ENCODE measurements at regions of chr17 and their contacts with region 1.

Region 1: GRCh38 chr17:78806451-78806850 is 24.4 kb upstream of the CYTH1 start:
- DNase-seq: no peak
- H3K4me3 Mint-ChIP-seq: no peak overlapping the region
- H3K27ac Mint-ChIP-seq: peak overlapping the region; percentile 95
- H3K4me1 Mint-ChIP-seq: peaks cover 63% of the 10 kb centered on the region
- H3K27me3 Mint-ChIP-seq: no peaks in the 10 kb centered on the region

Region 2: DNA sequence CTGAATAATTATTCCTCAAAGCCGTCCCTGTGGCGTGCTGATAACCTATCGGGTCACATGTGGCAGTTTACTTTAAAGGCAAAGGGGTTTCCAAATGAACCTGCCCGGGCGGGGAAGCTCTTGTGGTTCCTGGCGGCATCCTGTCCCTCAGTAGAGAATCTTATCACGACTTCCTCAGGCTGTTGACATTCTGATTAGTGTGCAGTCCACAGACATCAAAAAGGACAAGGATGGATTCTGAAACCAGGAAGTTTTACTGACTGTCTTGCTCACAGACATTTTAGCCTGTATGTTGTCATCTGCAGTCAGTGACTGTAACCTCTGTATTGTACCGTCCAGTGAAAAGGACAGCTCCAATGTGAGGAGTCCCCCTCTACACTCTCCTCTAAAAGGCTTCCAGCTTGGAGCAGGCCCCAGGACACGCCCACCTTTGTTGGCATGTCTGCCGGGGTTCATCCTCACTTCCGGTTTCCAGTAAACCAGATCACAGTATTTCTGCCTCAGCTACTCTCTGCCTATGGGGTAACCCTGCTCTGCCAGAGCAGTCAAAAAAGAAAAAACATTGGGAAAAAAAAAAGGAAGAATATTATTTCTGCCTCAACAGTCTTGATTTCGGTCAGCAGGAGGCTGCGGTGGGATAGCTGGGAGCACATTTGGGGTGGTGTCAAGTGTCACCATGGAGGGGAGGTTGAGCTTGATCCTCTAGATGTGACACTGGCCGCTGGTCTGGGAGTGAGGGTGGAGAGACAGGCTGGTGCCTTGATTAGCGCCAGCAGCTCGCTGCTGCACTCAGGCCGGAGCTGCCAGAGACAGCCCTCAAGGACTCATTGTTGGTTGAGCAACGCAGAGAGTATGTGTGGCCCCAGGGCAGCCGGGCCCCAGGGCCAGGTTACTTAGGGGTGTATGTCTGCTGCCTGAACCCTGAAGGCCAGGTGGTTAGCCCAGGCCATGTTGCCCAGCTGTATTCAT is 140.2 kb before region 1 on chr17:
- CTCF ChIA-PET with region 1: no interaction called
- POLR2A ChIA-PET with region 1: no interaction called
- DNase-seq: peak; percentile 70
- H3K4me3 Mint-ChIP-seq: peak overlapping the region; percentile 0
- H3K27ac Mint-ChIP-seq: peak overlapping the region; percentile 76
- H3K4me1 Mint-ChIP-seq: peaks cover 49% of the 10 kb centered on the region
- H3K27me3 Mint-ChIP-seq: no peaks in the 10 kb centered on the region

Region 3: GRCh38 chr17:78689029-78689428 is 117.4 kb before region 1 on chr17:
- CTCF ChIA-PET with region 1: no interaction called
- POLR2A ChIA-PET with region 1: no interaction called
- DNase-seq: no peak
- H3K4me3 Mint-ChIP-seq: no peak overlapping the region
- H3K27ac Mint-ChIP-seq: peak overlapping the region; percentile 32
- H3K4me1 Mint-ChIP-seq: peaks cover 8% of the 10 kb centered on the region
- H3K27me3 Mint-ChIP-seq: no peaks in the 10 kb centered on the region

Region 4: DNA sequence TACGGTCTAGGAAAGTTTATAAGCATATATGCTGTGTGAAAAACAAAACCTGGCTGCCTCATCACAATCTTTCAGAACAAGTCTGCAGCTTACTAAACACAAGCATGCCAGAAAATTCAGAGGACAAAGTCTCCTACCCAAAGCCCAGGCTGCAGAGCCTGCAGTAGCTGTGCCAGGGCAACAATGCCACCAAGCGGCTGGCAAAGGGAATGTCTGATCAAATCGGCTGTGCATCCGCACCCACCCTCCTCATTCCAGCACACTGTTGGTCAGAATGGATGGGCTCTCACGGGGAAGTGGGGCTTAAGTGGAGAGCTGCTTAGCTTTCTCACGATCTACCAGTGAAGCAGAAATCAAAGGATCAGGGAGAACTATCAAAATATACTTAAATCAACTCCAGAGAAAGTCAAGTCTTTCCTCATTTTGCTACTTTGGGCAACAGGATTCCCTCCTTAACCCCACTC is 97.9 kb before region 1 on chr17:
- CTCF ChIA-PET with region 1: interaction called, 10 read pairs
- POLR2A ChIA-PET with region 1: interaction called, 9 read pairs
- DNase-seq: peak; percentile 68
- H3K4me3 Mint-ChIP-seq: peak overlapping the region; percentile 29
- H3K27ac Mint-ChIP-seq: peak overlapping the region; percentile 80
- H3K4me1 Mint-ChIP-seq: peaks cover 68% of the 10 kb centered on the region
- H3K27me3 Mint-ChIP-seq: no peaks in the 10 kb centered on the region

Region 5: DNA sequence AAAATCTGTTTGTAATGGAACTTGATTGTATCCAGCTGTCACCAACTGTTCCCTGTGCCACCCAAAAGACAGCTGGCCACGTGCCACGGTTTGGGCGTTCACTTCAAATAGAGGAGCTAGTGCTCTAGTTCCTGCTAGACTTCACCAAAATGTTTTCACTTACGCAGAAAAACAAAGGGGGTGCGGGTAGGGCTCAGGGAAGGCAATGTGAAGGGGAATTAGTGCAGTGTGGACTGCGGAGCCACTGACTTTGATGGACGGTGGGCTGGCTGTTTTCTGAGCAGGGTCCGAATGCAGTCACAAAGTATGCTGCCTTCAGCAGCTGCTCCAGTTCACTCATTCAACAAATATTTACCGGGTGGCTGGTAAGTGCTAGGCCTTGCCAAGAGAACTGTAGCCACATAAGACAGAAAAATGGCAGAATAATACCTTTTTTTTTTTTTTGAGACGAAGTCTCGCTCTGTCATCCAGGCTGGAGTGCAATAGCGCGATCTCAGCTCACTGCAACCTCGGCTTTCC is 16.7 kb before region 1 on chr17:
- CTCF ChIA-PET with region 1: interaction called, 3 read pairs
- POLR2A ChIA-PET with region 1: interaction called, 28 read pairs
- DNase-seq: no peak
- H3K4me3 Mint-ChIP-seq: no peak overlapping the region
- H3K27ac Mint-ChIP-seq: peak overlapping the region; percentile 82
- H3K4me1 Mint-ChIP-seq: peaks cover 65% of the 10 kb centered on the region
- H3K27me3 Mint-ChIP-seq: no peaks in the 10 kb centered on the region

Region 6: GRCh38 chr17:78817123-78817522 is 10.7 kb after region 1 on chr17:
- CTCF ChIA-PET with region 1: interaction called, 3 read pairs
- POLR2A ChIA-PET with region 1: interaction called, 51 read pairs
- DNase-seq: peak; percentile 88
- H3K4me3 Mint-ChIP-seq: peak overlapping the region; percentile 5
- H3K27ac Mint-ChIP-seq: peak overlapping the region; percentile 98
- H3K4me1 Mint-ChIP-seq: peaks cover 63% of the 10 kb centered on the region
- H3K27me3 Mint-ChIP-seq: no peaks in the 10 kb centered on the region

Region 7: DNA sequence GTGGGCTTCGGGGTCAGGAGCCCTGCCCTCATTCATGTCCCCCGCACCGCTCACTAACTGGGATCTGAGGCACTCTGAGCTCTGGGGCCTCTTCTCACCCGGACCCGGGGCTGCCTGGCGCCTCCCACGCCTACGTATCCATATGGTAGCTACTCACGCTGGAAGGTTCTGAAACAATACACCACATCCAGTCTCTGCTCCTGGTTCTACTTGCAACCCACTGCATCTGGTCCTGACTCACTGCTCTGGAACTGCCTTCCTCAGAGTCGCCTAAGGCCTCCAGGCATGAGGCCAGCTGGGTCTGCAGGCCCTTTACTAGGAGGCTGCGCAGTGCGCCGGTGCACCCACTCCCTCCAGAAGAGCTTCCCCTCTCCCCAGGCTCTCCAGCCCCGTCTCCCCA is 16.1 kb after region 1 on chr17:
- CTCF ChIA-PET with region 1: interaction called, 3 read pairs
- POLR2A ChIA-PET with region 1: interaction called, 51 read pairs
- DNase-seq: no peak
- H3K4me3 Mint-ChIP-seq: no peak overlapping the region
- H3K27ac Mint-ChIP-seq: peak overlapping the region; percentile 38
- H3K4me1 Mint-ChIP-seq: peaks cover 54% of the 10 kb centered on the region
- H3K27me3 Mint-ChIP-seq: no peaks in the 10 kb centered on the region

Region 8: GRCh38 chr17:78840725-78841611 is 34.5 kb after region 1 on chr17 and contains the start of gene USP36:
- CTCF ChIA-PET with region 1: no interaction called
- POLR2A ChIA-PET with region 1: interaction called, 20 read pairs
- DNase-seq: peak; percentile 100
- H3K4me3 Mint-ChIP-seq: peak within 1 kb of the TSS; percentile 94
- H3K27ac Mint-ChIP-seq: peak within 1 kb of the TSS; percentile 94
- H3K4me1 Mint-ChIP-seq: peaks cover 55% of the 10 kb centered on the region
- H3K27me3 Mint-ChIP-seq: no peaks in the 10 kb centered on the region
- total RNA-seq, gene USP36: 95.4 to 96.8 TPM

Measured in activated CD4-positive, alpha-beta memory T cell treated with anti-CD3 and anti-CD28 coated beads, Interleukin-2, amount 10 ng/mL, durations not matched to agents 7 days and 5 days (primary cell).